Posterior cingulate gyrus (tissue), 11 donors: ENCODE measurements at regions of chr20 and their contacts with region 1.

Region 1: DNA sequence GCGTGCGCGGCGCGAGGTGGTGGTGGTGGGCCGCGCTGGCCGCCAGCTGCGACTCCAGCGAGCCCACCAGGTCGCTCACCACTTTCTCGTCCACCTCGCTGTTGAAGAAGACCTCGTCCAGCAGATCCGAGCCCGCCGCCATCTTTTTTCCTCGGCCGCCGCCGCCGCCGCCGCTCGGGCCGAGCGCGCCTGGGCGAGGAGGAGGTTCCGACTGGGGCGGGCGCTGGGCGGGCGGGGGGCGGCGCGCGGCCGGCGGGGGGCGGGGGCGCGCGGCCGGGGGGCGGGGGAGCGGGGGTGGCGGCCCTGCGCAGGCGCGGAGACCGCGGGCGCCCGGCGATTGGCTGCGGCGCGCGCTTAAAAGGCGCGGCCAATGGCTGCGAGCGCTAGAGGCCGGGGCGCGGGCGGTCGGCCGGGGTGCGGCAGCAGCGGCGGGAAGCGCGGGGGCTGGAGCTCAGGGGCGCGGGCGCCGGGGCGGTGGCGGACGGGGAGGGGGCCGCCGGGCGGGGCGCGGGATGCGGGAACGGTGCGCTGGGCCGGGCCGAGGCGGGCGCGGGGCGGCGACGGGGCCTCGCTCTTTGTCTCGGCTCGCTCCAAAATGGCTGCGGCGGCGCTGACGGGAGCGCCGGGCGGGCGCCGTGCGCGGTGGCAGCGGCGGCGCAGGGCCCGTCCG is at the start of gene TAF4:
- DNase-seq: peak; percentile 59 to 96 (median 66)

Region 2: GRCh38 chr20:61937963-61938838 is 127.6 kb before region 1 on chr20:
- intact Hi-C with region 1: no loop called
- DNase-seq: peak in 6 of 10 donors; percentile 4 to 83 (median 38)

Region 3: DNA sequence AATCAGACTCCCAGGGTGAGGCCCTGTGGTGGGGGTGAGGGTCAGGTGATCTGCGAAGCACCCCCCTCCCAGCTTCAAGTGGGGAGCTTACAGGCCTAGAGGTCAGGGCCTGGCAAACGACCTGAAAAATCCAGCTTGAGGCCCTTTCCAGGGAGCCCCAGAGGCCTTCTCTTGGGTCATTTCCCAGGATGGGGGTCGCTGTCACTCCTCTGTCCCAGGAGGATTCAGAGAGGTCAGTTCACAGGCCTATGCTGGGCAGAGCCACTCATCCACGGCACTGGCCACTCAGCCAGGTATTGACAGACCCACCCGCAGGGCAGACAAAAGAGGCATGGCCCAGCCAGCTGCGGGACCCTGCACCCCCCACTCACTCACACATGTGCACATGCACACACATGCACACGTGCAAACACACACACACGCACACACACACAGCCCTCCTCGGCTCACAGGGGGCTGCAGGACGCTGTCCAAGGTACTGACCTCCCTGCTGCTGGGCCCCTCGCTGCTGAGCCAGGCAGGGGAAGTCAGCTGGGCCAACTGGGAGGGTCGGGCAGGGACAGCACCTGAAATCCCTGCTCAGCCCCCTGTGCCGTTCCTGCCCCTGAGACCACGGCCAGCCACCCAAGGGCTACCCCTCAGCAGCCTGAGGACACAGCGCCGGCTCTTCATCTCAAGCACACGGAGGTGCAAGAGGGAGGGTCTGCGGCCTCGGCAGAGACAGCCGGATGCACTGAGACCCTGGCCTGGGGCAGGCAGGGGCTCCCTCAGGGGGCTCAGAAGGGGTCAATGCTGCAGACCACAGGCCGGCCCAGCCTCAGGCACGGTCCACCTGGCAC is 113.9 kb before region 1 on chr20:
- intact Hi-C with region 1: no loop called
- DNase-seq: peak in 5 of 10 donors; percentile 5 to 75 (median 10)

Region 4: DNA sequence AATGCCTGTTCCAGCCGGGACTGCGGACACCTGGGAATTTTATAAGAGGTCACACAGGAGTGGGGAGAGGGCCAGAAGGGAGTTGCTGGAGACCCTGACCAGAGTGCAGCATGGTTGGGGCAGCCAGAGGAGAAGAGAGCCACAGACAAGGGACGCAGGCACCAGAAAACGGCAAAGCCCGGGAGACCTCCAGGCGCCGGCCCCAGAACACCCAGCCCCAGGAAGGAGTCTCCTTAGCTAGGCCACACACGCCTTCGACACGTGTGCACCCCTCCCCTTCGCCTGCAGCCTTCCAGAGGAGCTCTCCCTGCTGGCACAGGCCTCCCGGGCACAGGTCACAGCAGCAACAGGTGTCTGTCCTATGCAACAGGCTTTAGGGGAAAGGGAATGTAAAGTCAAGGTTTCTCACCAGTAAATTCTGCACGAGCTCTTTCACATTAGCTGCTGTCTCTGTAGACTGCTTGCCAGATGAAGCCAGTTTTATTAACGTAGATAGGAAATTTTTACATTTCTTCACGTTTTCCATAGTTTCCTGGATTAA is 57.1 kb before region 1 on chr20:
- intact Hi-C with region 1: no loop called
- DNase-seq: peak in 1 of 10 donors; percentile 25

Region 5: GRCh38 chr20:62019881-62020492 is 45.8 kb before region 1 on chr20:
- intact Hi-C with region 1: loop called (anchors 5 kb)
- DNase-seq: peak in 2 of 10 donors; percentile 75 to 79

Region 6: DNA sequence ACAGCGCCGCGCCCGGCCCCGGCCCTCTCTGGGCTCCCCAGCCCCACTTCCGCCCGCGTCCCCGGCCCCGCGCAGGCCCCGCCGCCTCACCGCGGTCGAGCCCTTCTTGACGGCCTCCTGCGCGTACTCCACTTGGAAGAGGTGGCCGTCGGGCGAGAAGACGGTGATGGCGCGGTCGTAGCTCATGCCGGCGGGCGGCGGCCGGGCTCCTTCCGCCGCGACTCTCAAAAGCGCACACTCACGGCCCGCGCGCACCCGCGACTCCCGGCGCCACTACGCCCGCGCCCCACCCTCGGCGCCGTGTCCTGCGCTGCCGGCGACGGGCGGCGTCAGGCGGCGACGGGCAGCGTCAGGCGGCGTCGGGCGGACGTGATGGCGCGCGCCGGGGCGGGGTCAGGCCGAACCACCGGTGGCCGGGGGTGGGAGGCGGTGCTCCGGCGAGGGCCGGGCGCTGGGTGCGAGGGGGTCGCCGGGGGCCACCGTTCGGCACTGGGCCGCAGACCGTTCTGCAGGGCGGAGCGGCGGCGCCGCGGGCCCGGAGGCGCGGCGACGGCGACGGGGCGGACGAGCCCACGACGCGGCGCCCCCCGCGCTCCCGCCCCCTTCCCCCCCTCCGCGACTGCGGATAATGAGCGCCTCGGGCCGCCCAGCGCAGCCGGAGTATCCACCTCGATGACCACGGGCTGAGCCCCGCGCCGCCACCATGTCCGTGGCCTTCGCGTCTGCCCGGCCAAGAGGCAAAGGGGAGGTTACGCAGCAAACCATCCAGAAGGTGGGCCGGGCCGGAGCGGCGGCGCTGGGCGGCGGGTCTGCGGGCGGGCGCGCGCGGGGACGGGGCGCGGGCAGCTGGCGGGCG is 77.5 kb after region 1 on chr20 and contains the starts of genes PSMA7 and SS18L1:
- intact Hi-C with region 1: loop called (anchors 2 kb)
- DNase-seq: peak; percentile 73 to 98 (median 86)